PC-3 (cell line): ENCODE measurements at regions of chrX and their contacts with region 1.

Region 1: GRCh38 chrX:131854581-131854980 is 168.5 kb upstream of the STK26 start:
- DNase-seq: peak; percentile 34
- ATAC-seq: no peak
- H3K4me3 ChIP-seq: no peak overlapping the region
- H3K27ac ChIP-seq: no peak overlapping the region
- H3K4me1 ChIP-seq: no peaks in the 10 kb centered on the region
- H3K27me3 ChIP-seq: no peaks in the 10 kb centered on the region
- CTCF ChIP-seq: peak; percentile 60

Region 2: GRCh38 chrX:131895807-131896206 is 41.2 kb after region 1 on chrX:
- CTCF ChIA-PET with region 1: no interaction called
- POLR2A ChIA-PET with region 1: interaction called, 11 read pairs
- intact Hi-C with region 1: no loop called
- DNase-seq: no peak
- ATAC-seq: 0 out of 2 replicates have a peak, but pooled peaks have one; percentile 11
- H3K4me3 ChIP-seq: no peak overlapping the region
- H3K27ac ChIP-seq: no peak overlapping the region
- H3K4me1 ChIP-seq: peaks cover 14% of the 10 kb centered on the region
- H3K27me3 ChIP-seq: no peaks in the 10 kb centered on the region
- CTCF ChIP-seq: no peak

Region 3: GRCh38 chrX:131988236-131988635 is 133.7 kb after region 1 on chrX:
- CTCF ChIA-PET with region 1: no interaction called
- POLR2A ChIA-PET with region 1: no interaction called
- intact Hi-C with region 1: no loop called
- DNase-seq: no peak
- ATAC-seq: no peak
- H3K4me3 ChIP-seq: no peak overlapping the region
- H3K27ac ChIP-seq: no peak overlapping the region
- H3K4me1 ChIP-seq: peaks cover 3% of the 10 kb centered on the region; the same call in 1 of the 2 replicates
- H3K27me3 ChIP-seq: no peaks in the 10 kb centered on the region
- CTCF ChIP-seq: no peak

Region 4: GRCh38 chrX:132071260-132071659 is 216.7 kb after region 1 on chrX:
- CTCF ChIA-PET with region 1: interaction called, 11 read pairs
- POLR2A ChIA-PET with region 1: no interaction called
- intact Hi-C with region 1: loop called (anchors 1 kb)
- DNase-seq: peak; percentile 37
- ATAC-seq: peak; percentile 45; the same call in 1 of the 2 replicates
- H3K4me3 ChIP-seq: no peak overlapping the region
- H3K27ac ChIP-seq: no peak overlapping the region
- H3K4me1 ChIP-seq: peaks cover 16% of the 10 kb centered on the region
- H3K27me3 ChIP-seq: no peaks in the 10 kb centered on the region
- CTCF ChIP-seq: peak; percentile 58

Region 5: DNA sequence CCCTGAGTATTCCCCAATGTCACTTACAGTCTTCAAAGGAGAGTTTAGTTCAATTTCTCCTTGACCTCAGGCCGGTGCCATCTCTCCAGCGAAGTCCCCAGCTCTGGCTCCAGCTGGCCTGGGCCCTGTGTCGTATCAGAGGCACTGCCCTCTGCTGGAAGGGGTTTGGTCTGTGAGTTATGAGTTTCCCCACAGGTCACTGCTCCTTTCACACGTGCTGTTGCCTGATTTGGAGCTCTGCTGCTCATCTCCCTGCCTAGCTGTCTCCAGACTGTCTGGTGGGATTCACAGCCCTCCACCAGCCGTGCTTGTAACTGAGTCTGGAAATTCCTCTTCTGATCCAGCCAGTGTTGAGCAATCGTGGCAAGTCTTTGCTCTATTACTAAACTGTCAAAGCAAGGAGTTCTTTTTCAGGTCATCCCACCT is 364.8 kb after region 1 on chrX and contains the start of gene RAP2C:
- CTCF ChIA-PET with region 1: interaction called, 17 read pairs
- POLR2A ChIA-PET with region 1: no interaction called
- intact Hi-C with region 1: no loop called
- DNase-seq: peak; percentile 78
- ATAC-seq: peak; percentile 56
- H3K4me3 ChIP-seq: peak within 1 kb of the TSS; percentile 92
- H3K27ac ChIP-seq: peak within 1 kb of the TSS; percentile 72
- H3K4me1 ChIP-seq: 0 out of 2 replicates have a peak, but pooled peaks cover 19% of the 10 kb centered on the region
- H3K27me3 ChIP-seq: no peaks in the 10 kb centered on the region
- CTCF ChIP-seq: peak; percentile 72
- total RNA-seq, gene RAP2C: 13.0 and 13.8 TPM in 2 replicates